ENCODE measurements at regions of chr1 and their contacts with region 1.

Region 1: GRCh38 chr1:75134647-75135572 is 722 bp downstream of the LHX8 start:
- DNase-seq: no peak
- ATAC-seq: no peak
- H3K4me3 ChIP-seq: no peak overlapping the region
- H3K4me3 Mint-ChIP-seq: peak overlapping the region in 8 of 10 donors; percentile 45 to 87 (median 69)
- H3K27ac ChIP-seq: no peak overlapping the region
- H3K27ac Mint-ChIP-seq: peak overlapping the region in 1 of 9 donors; percentile 58
- H3K4me1 ChIP-seq: no peaks in the 10 kb centered on the region
- H3K4me1 Mint-ChIP-seq: peaks cover 0 to 25% (median 18%) of the 10 kb centered on the region in 7 donors
- H3K27me3 ChIP-seq: peaks cover 0 to 12% of the 10 kb centered on the region in 2 donors
- H3K27me3 Mint-ChIP-seq: peaks cover 78 to 93% (median 82%) of the 10 kb centered on the region in 5 donors

Region 2: GRCh38 chr1:75159154-75159553 is 24.2 kb after region 1 on chr1:
- CTCF ChIA-PET with region 1: no interaction called
- POLR2A ChIA-PET with region 1: no interaction called
- intact Hi-C with region 1: no loop called
- DNase-seq: no peak
- ATAC-seq: no peak
- H3K4me3 ChIP-seq: no peak overlapping the region
- H3K4me3 Mint-ChIP-seq: no peak overlapping the region
- H3K27ac ChIP-seq: no peak overlapping the region
- H3K27ac Mint-ChIP-seq: no peak overlapping the region
- H3K4me1 ChIP-seq: no peaks in the 10 kb centered on the region
- H3K4me1 Mint-ChIP-seq: no peaks in the 10 kb centered on the region
- H3K27me3 ChIP-seq: no peaks in the 10 kb centered on the region
- H3K27me3 Mint-ChIP-seq: peaks cover 0 to 13% (median 4%) of the 10 kb centered on the region in 5 donors

Region 3: DNA sequence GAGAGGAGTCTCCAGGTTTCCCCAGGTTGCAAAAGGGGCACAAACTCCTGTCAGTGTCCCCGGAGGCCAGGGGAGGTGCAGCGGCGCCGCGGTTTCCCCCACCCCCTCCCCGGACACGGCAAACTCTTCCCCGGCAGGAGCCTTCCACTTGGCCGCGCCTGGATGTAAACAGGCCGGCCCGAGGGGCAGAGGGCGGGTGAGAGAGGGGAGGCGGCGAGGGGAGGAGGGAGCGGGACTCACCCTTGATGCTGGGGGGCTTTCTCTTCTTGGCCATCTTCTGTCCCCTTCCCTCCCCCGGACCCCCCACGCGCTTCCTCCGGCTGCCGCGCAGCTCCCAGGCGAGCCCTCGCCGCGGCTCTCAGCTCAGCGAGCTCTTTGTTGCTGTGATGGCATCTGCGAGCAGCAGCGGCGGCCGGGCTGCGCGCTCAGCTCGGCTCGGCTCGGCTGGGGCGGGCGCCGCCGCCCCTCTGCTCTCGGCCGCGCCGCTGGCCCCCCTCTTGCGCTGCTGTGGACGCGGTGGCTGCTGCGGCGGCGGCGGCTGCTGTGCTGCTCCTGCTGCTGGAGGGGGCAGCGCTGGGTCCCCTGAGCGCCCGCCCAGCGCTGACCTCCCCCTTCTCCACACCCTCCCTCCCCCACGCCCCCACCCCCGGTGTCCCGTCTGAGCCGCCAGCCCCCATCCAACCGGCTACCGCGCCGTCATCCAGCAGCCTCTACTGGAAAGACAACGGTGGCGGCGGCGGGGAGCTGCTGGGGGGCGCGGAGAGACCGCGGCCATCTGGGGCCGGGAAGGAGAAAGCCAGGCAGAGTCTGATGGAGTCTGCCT is 480.9 kb after region 1 on chr1:
- CTCF ChIA-PET with region 1: no interaction called
- POLR2A ChIA-PET with region 1: no interaction called
- intact Hi-C with region 1: loop called in 1 of 2 experiments (anchors 10 kb)
- DNase-seq: peak in 4 of 9 donors; percentile 7 to 18 (median 16)
- ATAC-seq: peak; percentile 61
- H3K4me3 ChIP-seq: no peak overlapping the region
- H3K4me3 Mint-ChIP-seq: peak overlapping the region; percentile 27 to 83 (median 78)
- H3K27ac ChIP-seq: no peak overlapping the region
- H3K27ac Mint-ChIP-seq: no peak overlapping the region
- H3K4me1 ChIP-seq: peaks cover 4 to 8% of the 10 kb centered on the region in 2 donors
- H3K4me1 Mint-ChIP-seq: peaks cover 12 to 32% (median 21%) of the 10 kb centered on the region in 7 donors
- H3K27me3 ChIP-seq: peaks cover 0 to 28% of the 10 kb centered on the region in 2 donors
- H3K27me3 Mint-ChIP-seq: peaks cover 73 to 88% (median 82%) of the 10 kb centered on the region in 5 donors

Region 4: GRCh38 chr1:76868154-76868882 is 1733.4 kb after region 1 on chr1:
- CTCF ChIA-PET with region 1: no interaction called
- POLR2A ChIA-PET with region 1: no interaction called
- intact Hi-C with region 1: loop called in 1 of 2 experiments (anchors 5 kb)
- DNase-seq: peak in 3 of 9 donors; percentile 1 to 11 (median 6)
- ATAC-seq: peak; percentile 60
- H3K4me3 ChIP-seq: peak overlapping the region; percentile 45
- H3K4me3 Mint-ChIP-seq: peak overlapping the region; percentile 56 to 88 (median 76)
- H3K27ac ChIP-seq: no peak overlapping the region
- H3K27ac Mint-ChIP-seq: no peak overlapping the region
- H3K4me1 ChIP-seq: peaks cover 0 to 13% of the 10 kb centered on the region in 2 donors
- H3K4me1 Mint-ChIP-seq: peaks cover 0 to 25% (median 6%) of the 10 kb centered on the region in 7 donors
- H3K27me3 ChIP-seq: peaks cover 8 to 14% of the 10 kb centered on the region in 2 donors
- H3K27me3 Mint-ChIP-seq: peaks cover 57 to 77% (median 76%) of the 10 kb centered on the region in 5 donors

Measured in naive thymus-derived CD4-positive, alpha-beta T cell (primary cell).